MCF 10A (cell line): ENCODE measurements at regions of chr10 and their contacts with region 1.

Region 1: GRCh38 chr10:103888113-103888841 is 29.7 kb downstream of the STN1 start:
- DNase-seq: peak; percentile 95
- H3K4me3 Mint-ChIP-seq: peak overlapping the region; percentile 1
- H3K27ac Mint-ChIP-seq: peak overlapping the region; percentile 73
- H3K4me1 Mint-ChIP-seq: peaks cover 23% of the 10 kb centered on the region
- H3K27me3 Mint-ChIP-seq: no peaks in the 10 kb centered on the region
- CTCF ChIP-seq: peak; percentile 80

Region 2: DNA sequence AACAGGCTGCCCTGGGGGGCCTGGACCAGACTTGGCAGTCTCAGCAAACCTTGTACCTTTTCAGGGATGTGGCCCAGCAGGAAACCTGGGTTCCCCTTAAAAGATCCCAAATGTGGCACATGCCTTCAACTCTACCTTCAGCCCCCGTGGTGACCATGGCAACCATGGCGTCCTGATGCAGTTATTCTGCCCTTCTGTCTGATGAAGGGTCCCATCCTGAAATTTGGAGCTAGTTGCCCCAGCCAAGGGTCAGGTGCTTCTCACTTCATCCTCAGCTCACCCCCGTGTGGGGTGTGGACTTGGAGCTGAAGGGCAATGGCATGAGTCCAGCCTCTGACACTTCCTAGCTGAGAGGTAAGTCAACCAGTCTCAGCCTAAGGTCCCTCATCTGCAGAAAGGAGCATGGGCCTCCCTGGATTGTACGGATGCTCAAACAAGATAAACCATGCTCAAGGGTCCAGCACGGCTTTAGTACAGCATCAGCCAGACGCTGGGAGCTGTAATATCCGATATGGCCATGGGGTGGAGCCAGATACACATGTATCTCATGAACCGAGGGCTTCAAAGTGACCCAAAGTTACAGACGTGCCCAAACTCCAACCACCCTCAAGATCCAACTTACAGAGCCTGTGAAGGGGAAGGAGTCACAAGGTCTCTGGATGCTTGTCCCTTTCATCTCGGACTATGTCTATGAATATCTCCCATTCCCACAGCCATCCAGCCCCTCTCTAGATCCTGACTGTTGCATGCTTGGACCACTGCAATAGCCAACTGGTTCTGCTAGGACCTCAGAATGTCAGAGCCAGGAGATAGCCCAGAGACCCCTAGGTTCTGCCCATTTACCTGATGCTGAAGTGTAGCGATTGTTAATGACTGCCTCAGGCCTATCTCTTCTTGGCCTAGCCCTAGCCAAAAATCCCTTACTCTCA is 175.4 kb before region 1 on chr10:
- CTCF ChIA-PET with region 1: interaction called, 203 read pairs
- POLR2A ChIA-PET with region 1: interaction called, 18 read pairs
- intact Hi-C with region 1: loop called (anchors 1 kb)
- DNase-seq: peak; percentile 79
- H3K4me3 Mint-ChIP-seq: no peak overlapping the region
- H3K27ac Mint-ChIP-seq: peak overlapping the region; percentile 31
- H3K4me1 Mint-ChIP-seq: peaks cover 29% of the 10 kb centered on the region
- H3K27me3 Mint-ChIP-seq: no peaks in the 10 kb centered on the region
- CTCF ChIP-seq: peak; percentile 93

Region 3: GRCh38 chr10:103901299-103901698 is 13.0 kb after region 1 on chr10:
- CTCF ChIA-PET with region 1: interaction called, 46 read pairs
- POLR2A ChIA-PET with region 1: interaction called, 36 read pairs
- intact Hi-C with region 1: no loop called
- DNase-seq: no peak
- H3K4me3 Mint-ChIP-seq: no peak overlapping the region
- H3K27ac Mint-ChIP-seq: peak overlapping the region; percentile 87
- H3K4me1 Mint-ChIP-seq: peaks cover 16% of the 10 kb centered on the region
- H3K27me3 Mint-ChIP-seq: no peaks in the 10 kb centered on the region
- CTCF ChIP-seq: no peak

Region 4: GRCh38 chr10:103966671-103967447 is 78.6 kb after region 1 on chr10 and contains the start of gene SLK:
- CTCF ChIA-PET with region 1: interaction called, 8 read pairs
- POLR2A ChIA-PET with region 1: interaction called, 99 read pairs
- intact Hi-C with region 1: loop called (anchors 1 kb)
- DNase-seq: peak; percentile 75
- H3K4me3 Mint-ChIP-seq: peak within 1 kb of the TSS; percentile 89
- H3K27ac Mint-ChIP-seq: peak within 1 kb of the TSS; percentile 96
- H3K4me1 Mint-ChIP-seq: no peaks in the 10 kb centered on the region
- H3K27me3 Mint-ChIP-seq: no peaks in the 10 kb centered on the region
- CTCF ChIP-seq: no peak
- total RNA-seq, gene SLK: 57.3 and 71.9 TPM in 2 replicates

Region 5: GRCh38 chr10:104028146-104028545 is 139.9 kb after region 1 on chr10:
- CTCF ChIA-PET with region 1: interaction called, 8 read pairs
- POLR2A ChIA-PET with region 1: interaction called, 21 read pairs
- intact Hi-C with region 1: loop called (anchors 2 kb)
- DNase-seq: peak; percentile 20
- H3K4me3 Mint-ChIP-seq: no peak overlapping the region
- H3K27ac Mint-ChIP-seq: peak overlapping the region; percentile 75
- H3K4me1 Mint-ChIP-seq: no peaks in the 10 kb centered on the region
- H3K27me3 Mint-ChIP-seq: no peaks in the 10 kb centered on the region
- CTCF ChIP-seq: peak; percentile 20

Region 6: DNA sequence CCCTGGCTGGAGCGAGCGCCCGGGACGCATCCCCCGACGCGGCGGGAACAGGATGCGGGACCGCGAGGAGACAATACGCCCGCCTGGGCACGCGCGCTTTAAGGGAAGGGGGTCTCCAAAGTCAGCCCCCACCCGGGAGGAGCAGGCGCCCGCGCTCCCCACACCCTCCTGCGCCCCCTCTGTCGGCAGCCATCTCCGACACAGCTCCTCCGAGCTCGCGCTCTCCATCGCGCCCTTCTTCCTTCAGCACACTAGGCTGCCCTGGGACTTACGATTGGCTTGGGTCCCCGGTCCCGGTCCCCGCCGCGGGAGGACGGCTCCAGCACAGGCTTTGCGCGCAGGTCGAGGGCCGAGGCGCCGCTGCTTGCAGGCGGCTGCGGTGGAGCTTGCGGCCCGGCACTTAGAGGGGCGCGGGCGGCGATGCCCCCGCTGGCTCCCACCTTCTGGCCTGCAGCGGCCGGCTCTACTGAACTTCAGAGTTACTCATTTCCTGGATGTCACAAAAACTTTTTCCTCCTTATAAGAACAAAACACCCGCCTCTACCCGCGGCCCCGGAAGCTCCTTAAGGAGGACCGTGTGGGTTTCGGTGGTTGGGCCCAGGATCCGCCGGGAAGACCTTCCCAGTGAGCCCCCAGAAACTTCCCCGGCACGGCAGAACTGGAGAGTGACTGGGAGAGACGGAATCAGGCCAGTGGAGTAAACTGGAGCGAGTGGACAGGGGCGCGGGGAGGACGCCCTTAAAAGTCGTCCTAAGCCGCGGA is 449.9 kb after region 1 on chr10 and contains the start of gene ITPRIP:
- CTCF ChIA-PET with region 1: no interaction called
- POLR2A ChIA-PET with region 1: no interaction called
- intact Hi-C with region 1: loop called (anchors 10 kb)
- DNase-seq: peak; percentile 81
- H3K4me3 Mint-ChIP-seq: peak within 1 kb of the TSS; percentile 80
- H3K27ac Mint-ChIP-seq: peak within 1 kb of the TSS; percentile 97
- H3K4me1 Mint-ChIP-seq: peaks cover 39% of the 10 kb centered on the region
- H3K27me3 Mint-ChIP-seq: no peaks in the 10 kb centered on the region
- CTCF ChIP-seq: no peak
- total RNA-seq, gene ITPRIP: 29.4 and 29.8 TPM in 2 replicates